A549 (cell line): ENCODE measurements at regions of chr13 and their contacts with region 1.

Region 1: DNA sequence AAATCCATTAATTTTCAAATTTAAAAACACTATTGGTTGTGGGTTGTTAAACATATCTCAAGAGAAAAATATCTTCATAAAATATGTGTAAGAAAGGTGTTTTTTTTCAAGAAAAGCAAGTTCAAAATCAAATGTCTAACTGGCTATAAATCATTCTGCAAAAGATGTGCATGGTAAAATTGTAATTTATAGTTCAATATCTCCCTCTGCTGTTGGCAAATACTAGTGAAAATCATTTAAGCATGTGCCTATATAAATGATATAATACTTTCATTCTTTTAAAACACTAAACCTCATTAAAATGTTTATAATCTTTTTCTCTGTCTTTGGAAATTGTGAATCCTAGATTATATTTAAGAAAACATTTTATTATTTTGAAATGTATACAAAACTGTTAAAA is 17.2 kb upstream of the SLITRK6 start:
- DNase-seq: peak in 1 of 2 experiments; percentile 18
- ATAC-seq: no peak
- H3K4me3 ChIP-seq: no peak overlapping the region
- H3K27ac ChIP-seq: no peak overlapping the region
- H3K4me1 ChIP-seq: no peaks in the 10 kb centered on the region
- CTCF ChIP-seq: peak; percentile 40; the same call in 2 of the 3 replicates
- EP300 ChIP-seq: no peak
- POLR2A ChIP-seq: no peak
- RAD21 ChIP-seq: peak; percentile 57 to 71

Region 2: GRCh38 chr13:84896128-84896527 is 920.3 kb before region 1 on chr13:
- CTCF ChIA-PET with region 1: interaction called, 12 read pairs
- POLR2A ChIA-PET with region 1: no interaction called
- DNase-seq: peak in 1 of 2 experiments; percentile 65
- ATAC-seq: peak; percentile 59 to 74; a peak in 3 of 6 replicates
- H3K4me3 ChIP-seq: no peak overlapping the region
- H3K27ac ChIP-seq: no peak overlapping the region
- H3K4me1 ChIP-seq: no peaks in the 10 kb centered on the region
- CTCF ChIP-seq: peak; percentile 56
- EP300 ChIP-seq: no peak
- POLR2A ChIP-seq: no peak
- RAD21 ChIP-seq: peak; percentile 78 to 79; a peak in 4 of 5 replicates

Region 3: GRCh38 chr13:85632526-85633195 is 183.8 kb before region 1 on chr13:
- CTCF ChIA-PET with region 1: no interaction called
- POLR2A ChIA-PET with region 1: no interaction called
- DNase-seq: no peak
- ATAC-seq: no peak
- H3K4me3 ChIP-seq: no peak overlapping the region
- H3K27ac ChIP-seq: no peak overlapping the region
- H3K4me1 ChIP-seq: no peaks in the 10 kb centered on the region
- CTCF ChIP-seq: no peak
- EP300 ChIP-seq: no peak
- POLR2A ChIP-seq: no peak
- RAD21 ChIP-seq: no peak

Region 4: DNA sequence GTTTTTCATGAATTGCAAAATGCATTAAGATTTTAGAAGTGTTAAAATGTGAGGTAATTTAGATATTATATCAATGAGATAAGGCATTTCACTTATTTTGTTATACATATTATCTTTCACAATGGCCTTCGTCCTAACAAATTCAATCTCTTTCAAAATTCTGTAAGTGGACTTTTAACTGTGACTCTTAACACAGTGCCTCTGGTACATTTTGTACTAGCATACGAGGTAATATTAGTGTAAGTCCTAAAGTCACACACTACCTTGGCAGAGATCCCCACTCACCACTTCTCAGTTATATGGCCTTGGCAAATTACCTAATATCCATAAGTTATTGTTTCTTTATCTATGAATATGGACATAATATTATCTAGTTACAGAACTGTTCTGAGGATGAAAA is 84.1 kb after region 1 on chr13:
- CTCF ChIA-PET with region 1: no interaction called
- POLR2A ChIA-PET with region 1: no interaction called
- DNase-seq: no peak
- ATAC-seq: no peak
- H3K4me3 ChIP-seq: no peak overlapping the region
- H3K27ac ChIP-seq: no peak overlapping the region
- H3K4me1 ChIP-seq: no peaks in the 10 kb centered on the region
- CTCF ChIP-seq: no peak
- EP300 ChIP-seq: no peak
- POLR2A ChIP-seq: no peak
- RAD21 ChIP-seq: no peak